Motor neuron (in vitro differentiated cells): ENCODE measurements at regions of chr3 and their contacts with region 1.

Region 1: GRCh38 chr3:66816090-66816761 is 181.9 kb upstream of the KBTBD8 start:
- ATAC-seq: peak; percentile 49 to 87 (median 72)
- H3K4me3 ChIP-seq: no peak overlapping the region
- H3K27ac ChIP-seq: no peak overlapping the region
- H3K4me1 ChIP-seq: peaks cover 21 to 27% of the 10 kb centered on the region in 2 donors

Region 2: DNA sequence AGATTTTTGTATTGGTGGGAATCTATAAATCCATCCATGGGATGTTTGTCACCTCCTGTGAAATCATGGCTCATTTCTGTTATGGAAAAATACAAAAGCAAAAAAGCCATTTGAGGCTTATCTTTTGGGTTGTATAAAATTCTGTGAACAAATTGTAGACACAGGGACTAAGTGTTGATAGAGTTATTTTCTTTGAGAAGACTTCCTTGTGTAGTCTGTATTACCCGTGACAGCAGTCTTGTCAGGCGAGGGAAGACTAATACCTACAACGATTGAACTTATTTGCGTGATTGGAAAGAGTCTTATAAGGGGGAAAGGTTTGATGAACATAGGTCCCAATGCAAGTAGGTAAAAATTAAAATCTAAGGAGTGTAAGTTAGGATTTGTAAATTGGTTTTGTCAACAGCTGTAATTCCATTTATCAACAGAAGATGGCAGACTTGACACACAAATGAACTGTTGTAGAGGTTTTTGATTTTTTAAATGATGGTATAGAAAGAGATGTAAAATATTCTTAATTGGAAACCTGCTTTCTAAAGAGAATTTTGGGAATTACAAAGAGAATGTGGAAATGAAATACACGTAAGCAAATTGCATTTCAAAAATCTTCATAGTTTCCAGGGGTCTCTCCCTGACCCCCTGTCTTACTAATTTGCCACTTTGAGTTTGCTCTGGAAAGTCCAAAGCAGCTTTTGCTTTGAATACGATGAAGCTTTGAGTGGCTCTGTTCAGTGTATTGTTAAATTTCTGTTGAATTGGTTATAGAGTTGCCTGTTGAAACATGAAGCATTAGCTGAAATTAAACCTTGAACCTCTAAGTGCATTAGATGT is 562.2 kb before region 1 on chr3:
- in situ Hi-C with region 1: loop called in 2 of 9 experiments (anchors 10 to 25 kb)
- ATAC-seq: peak in 3 of 8 experiments; percentile 31 to 40 (median 31)
- H3K4me3 ChIP-seq: no peak overlapping the region
- H3K27ac ChIP-seq: no peak overlapping the region
- H3K4me1 ChIP-seq: no peaks in the 10 kb centered on the region

Region 3: GRCh38 chr3:66276705-66277274 is 539.4 kb before region 1 on chr3:
- in situ Hi-C with region 1: loop called in 8 of 9 experiments (anchors 5 to 25 kb)
- ATAC-seq: peak in 4 of 8 experiments; percentile 43 to 74 (median 62)
- H3K4me3 ChIP-seq: no peak overlapping the region
- H3K27ac ChIP-seq: no peak overlapping the region
- H3K4me1 ChIP-seq: no peaks in the 10 kb centered on the region

Region 4: DNA sequence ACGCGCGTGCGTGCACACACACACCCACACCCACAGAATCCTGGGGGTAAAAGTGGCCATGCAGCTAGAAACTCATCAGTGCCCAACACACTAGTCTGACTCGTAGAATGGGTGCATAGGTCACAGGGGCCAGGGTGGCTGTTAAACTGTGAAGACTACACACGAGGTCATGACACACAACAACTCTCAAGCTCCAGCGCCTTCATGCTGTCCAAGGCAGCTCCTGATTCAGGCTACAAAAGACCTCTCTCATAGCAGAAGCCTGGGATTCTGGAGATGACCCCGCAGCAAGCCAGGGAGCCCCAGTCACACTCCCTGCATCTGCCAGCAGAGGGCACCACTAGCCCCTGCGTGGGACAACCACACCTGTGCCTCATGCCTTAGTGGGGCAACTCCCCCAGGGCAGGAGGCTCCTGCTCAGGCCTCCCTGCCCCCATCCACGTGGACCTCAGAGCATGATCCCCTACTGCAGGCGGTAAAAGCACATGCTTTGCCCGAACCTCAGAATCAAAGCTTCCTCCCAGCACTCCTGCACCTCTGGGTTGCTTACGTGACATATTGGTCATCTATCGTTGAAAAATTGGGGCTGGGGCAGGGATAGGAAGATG is 408.5 kb before region 1 on chr3:
- in situ Hi-C with region 1: loop called in 7 of 9 experiments (anchors 10 to 25 kb)
- ATAC-seq: peak; percentile 1 to 86 (median 72)
- H3K4me3 ChIP-seq: no peak overlapping the region
- H3K27ac ChIP-seq: no peak overlapping the region
- H3K4me1 ChIP-seq: peaks cover 0 to 3% of the 10 kb centered on the region in 2 donors

Region 5: GRCh38 chr3:66722675-66723074 is 93.6 kb before region 1 on chr3:
- in situ Hi-C with region 1: no loop called
- ATAC-seq: peak in 3 of 8 experiments; percentile 26 to 80 (median 64)
- H3K4me3 ChIP-seq: no peak overlapping the region
- H3K27ac ChIP-seq: no peak overlapping the region
- H3K4me1 ChIP-seq: peaks cover 0 to 6% of the 10 kb centered on the region in 2 donors